B cell (primary cell): ENCODE measurements at regions of chr22 and their contacts with region 1.

Region 1: GRCh38 chr22:22666307-22667091 is 22.1 kb downstream of the GGTLC2 start:
- DNase-seq: peak; percentile 63
- ATAC-seq: peak; percentile 78
- H3K4me3 ChIP-seq: no peak overlapping the region
- H3K4me3 Mint-ChIP-seq: no peak overlapping the region
- H3K27ac ChIP-seq: no peak overlapping the region
- H3K27ac Mint-ChIP-seq: peak overlapping the region; percentile 6
- H3K4me1 ChIP-seq: peaks cover 6 to 18% of the 10 kb centered on the region in 2 donors
- H3K4me1 Mint-ChIP-seq: peaks cover 17% of the 10 kb centered on the region
- H3K27me3 ChIP-seq: peaks cover 0 to 2% (median 0%) of the 10 kb centered on the region in 4 experiments
- H3K27me3 Mint-ChIP-seq: peaks cover 3% of the 10 kb centered on the region
- CTCF ChIP-seq: peak; percentile 71

Region 2: DNA sequence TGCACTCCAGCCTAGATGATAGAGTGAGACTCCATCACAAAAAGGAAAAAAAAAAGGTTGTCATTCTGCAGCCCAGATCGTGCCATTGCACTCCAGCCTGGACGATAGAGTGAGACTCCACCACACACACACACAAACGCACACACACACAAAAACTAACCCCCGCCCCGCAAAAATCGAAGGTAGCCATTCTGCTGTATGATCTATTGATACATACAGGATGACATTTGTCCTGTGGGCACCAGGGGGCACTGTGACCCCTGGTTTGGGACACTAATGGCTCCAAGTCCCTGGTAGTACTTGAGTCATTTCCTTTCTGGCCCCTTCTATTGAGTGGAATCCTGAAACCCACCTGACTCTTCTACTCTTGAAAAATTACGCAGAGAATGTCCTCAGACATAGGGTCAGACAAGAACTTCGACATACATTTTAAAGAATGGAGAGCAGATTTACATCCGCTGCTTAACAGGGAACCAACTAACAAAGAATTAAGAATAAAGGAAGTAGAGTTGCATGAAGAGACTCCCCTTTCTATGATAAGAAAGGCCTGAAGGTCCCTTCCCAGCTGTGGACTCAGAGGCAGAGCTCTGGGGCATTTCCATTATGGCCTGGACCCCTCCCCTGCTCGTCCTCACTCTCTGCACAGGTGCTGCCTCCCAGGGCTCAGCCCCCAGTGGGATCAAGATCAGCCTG is 72.4 kb before region 1 on chr22:
- CTCF ChIA-PET with region 1: interaction called, 3 read pairs
- POLR2A ChIA-PET with region 1: interaction called, 3 read pairs
- intact Hi-C with region 1: loop called (anchors 5 kb)
- DNase-seq: peak; percentile 80
- ATAC-seq: peak; percentile 74
- H3K4me3 ChIP-seq: no peak overlapping the region
- H3K4me3 Mint-ChIP-seq: no peak overlapping the region
- H3K27ac ChIP-seq: no peak overlapping the region
- H3K27ac Mint-ChIP-seq: peak overlapping the region; percentile 82
- H3K4me1 ChIP-seq: peaks cover 10 to 11% of the 10 kb centered on the region in 2 donors
- H3K4me1 Mint-ChIP-seq: peaks cover 26% of the 10 kb centered on the region
- H3K27me3 ChIP-seq: no peaks in the 10 kb centered on the region
- H3K27me3 Mint-ChIP-seq: no peaks in the 10 kb centered on the region
- CTCF ChIP-seq: peak; percentile 81

Region 3: GRCh38 chr22:22681221-22681739 is 14.8 kb after region 1 on chr22:
- CTCF ChIA-PET with region 1: interaction called, 21 read pairs
- POLR2A ChIA-PET with region 1: no interaction called
- intact Hi-C with region 1: no loop called
- DNase-seq: no peak
- ATAC-seq: no peak
- H3K4me3 ChIP-seq: no peak overlapping the region
- H3K4me3 Mint-ChIP-seq: no peak overlapping the region
- H3K27ac ChIP-seq: no peak overlapping the region
- H3K27ac Mint-ChIP-seq: no peak overlapping the region
- H3K4me1 ChIP-seq: peaks cover 34 to 44% of the 10 kb centered on the region in 2 donors
- H3K4me1 Mint-ChIP-seq: peaks cover 48% of the 10 kb centered on the region
- H3K27me3 ChIP-seq: no peaks in the 10 kb centered on the region
- H3K27me3 Mint-ChIP-seq: no peaks in the 10 kb centered on the region
- CTCF ChIP-seq: no peak

Region 4: DNA sequence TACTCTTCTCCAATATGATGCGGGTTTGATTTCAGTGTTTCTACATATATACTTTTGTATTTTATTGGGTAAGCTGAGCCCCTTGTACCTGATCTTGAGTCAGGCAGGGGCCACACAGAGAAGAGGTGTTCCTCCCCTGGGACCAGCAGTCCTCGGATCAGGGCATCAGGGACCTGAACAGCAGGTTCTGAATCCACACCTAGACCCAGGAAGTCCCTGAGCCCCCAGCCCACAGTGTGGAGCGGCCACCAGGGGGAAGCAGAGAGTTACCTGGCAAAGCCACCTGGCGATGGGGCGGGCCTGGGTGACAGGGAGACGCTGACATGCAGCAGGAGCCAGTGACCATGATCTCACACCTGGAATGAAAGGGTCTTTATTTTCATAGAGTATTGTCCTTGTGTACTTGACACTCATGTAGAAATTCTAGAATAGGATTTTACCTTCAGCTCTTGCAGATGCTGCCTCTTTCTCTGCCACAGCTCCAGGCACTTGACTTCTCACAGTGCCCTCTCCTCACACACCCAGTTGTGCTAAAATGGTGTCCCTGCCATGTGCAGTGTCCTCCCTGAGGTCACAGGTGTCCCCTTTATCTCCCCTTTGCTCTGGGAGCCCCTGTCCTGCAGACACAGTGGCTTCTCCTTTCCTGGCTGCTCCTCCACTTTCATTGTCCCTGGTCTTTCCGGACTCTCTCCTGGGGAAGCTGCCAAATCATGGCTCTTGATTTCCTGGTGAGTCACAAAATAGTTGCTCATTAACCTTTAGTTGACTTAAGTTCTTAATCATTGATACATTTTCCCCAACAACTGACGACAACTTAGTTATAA is 26.4 kb after region 1 on chr22:
- CTCF ChIA-PET with region 1: interaction called, 31 read pairs
- POLR2A ChIA-PET with region 1: no interaction called
- intact Hi-C with region 1: no loop called
- DNase-seq: peak; percentile 83
- ATAC-seq: peak; percentile 81
- H3K4me3 ChIP-seq: no peak overlapping the region
- H3K4me3 Mint-ChIP-seq: peak overlapping the region; percentile 71
- H3K27ac ChIP-seq: peak overlapping the region in 1 of 2 donors; percentile 26
- H3K27ac Mint-ChIP-seq: peak overlapping the region; percentile 85
- H3K4me1 ChIP-seq: peaks cover 28 to 44% of the 10 kb centered on the region in 2 donors
- H3K4me1 Mint-ChIP-seq: peaks cover 34% of the 10 kb centered on the region
- H3K27me3 ChIP-seq: no peaks in the 10 kb centered on the region
- H3K27me3 Mint-ChIP-seq: no peaks in the 10 kb centered on the region
- CTCF ChIP-seq: peak; percentile 87

Region 5: DNA sequence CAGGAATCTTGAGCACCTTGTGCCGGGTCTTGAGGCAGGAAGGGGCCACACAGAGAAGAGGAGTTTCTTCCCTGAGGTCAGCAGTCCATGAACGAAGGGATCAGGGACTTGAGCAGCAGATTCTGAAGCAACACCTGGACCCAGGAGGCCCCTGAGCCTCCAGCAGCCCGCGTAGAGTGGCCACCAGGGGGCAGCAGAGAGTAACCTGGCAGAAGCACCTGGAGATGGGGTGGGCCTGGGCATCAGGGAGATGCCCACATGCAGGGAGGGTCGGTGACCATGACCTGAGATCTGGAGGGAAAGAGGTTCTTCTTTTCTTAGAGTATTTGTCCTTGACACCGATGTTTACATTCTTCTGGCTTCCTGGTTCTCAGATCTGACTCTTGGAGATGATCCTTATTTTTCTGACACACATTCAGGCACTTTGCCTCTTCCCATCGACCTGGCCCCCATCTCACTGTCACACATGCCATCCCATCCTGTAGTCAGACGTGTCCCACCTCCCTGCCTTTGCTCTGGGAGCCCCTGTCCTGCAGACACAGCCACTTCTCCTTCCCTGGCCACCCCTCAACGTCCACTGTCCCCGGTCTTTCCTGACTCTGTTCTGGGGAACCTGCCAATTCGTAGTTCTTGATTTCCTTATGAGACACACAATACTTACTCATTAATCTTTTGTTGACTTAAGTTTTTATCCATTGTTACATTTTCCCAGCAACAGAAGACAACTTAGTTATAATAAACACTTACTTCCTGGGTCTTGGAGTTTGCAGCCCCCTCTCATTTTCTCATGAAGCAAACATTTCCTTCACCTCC is 44.4 kb after region 1 on chr22:
- CTCF ChIA-PET with region 1: interaction called, 20 read pairs
- POLR2A ChIA-PET with region 1: no interaction called
- intact Hi-C with region 1: no loop called
- DNase-seq: peak; percentile 80
- ATAC-seq: peak; percentile 48
- H3K4me3 ChIP-seq: no peak overlapping the region
- H3K4me3 Mint-ChIP-seq: peak overlapping the region; percentile 23
- H3K27ac ChIP-seq: no peak overlapping the region
- H3K27ac Mint-ChIP-seq: peak overlapping the region; percentile 76
- H3K4me1 ChIP-seq: peaks cover 30 to 53% of the 10 kb centered on the region in 2 donors
- H3K4me1 Mint-ChIP-seq: peaks cover 52% of the 10 kb centered on the region
- H3K27me3 ChIP-seq: peaks cover 0 to 2% (median 0%) of the 10 kb centered on the region in 4 experiments
- H3K27me3 Mint-ChIP-seq: peaks cover 3% of the 10 kb centered on the region
- CTCF ChIP-seq: peak; percentile 89

Region 6: GRCh38 chr22:22748297-22748743 is 81.8 kb after region 1 on chr22:
- CTCF ChIA-PET with region 1: interaction called, 25 read pairs
- POLR2A ChIA-PET with region 1: no interaction called
- intact Hi-C with region 1: no loop called
- DNase-seq: peak; percentile 67
- ATAC-seq: peak; percentile 26
- H3K4me3 ChIP-seq: no peak overlapping the region
- H3K4me3 Mint-ChIP-seq: peak overlapping the region; percentile 26
- H3K27ac ChIP-seq: no peak overlapping the region
- H3K27ac Mint-ChIP-seq: peak overlapping the region; percentile 13
- H3K4me1 ChIP-seq: peaks cover 40 to 47% of the 10 kb centered on the region in 2 donors
- H3K4me1 Mint-ChIP-seq: peaks cover 51% of the 10 kb centered on the region
- H3K27me3 ChIP-seq: no peaks in the 10 kb centered on the region
- H3K27me3 Mint-ChIP-seq: no peaks in the 10 kb centered on the region
- CTCF ChIP-seq: no peak

Region 7: DNA sequence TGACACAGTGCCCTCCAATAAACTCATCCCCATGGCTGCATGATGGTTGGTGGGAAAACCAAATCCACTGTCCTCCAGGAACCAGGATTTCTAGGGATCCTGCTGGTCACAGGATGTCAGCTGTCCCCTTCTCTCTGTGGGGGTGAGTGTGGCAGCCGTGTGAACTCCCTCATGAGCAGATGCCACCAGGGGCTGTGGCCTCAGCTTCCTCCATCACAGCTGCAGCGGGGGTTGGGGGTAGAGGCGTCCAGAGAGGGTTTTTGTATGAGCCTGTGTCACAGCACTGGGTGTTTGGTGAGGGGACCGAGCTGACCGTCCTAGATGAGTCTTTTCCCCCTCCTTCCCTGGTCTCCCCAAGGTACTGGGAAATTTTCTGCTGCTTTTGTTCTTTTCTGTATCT is 247.5 kb after region 1 on chr22:
- CTCF ChIA-PET with region 1: no interaction called
- POLR2A ChIA-PET with region 1: no interaction called
- intact Hi-C with region 1: no loop called
- DNase-seq: peak; percentile 60
- ATAC-seq: peak; percentile 73
- H3K4me3 ChIP-seq: no peak overlapping the region
- H3K4me3 Mint-ChIP-seq: peak overlapping the region; percentile 55
- H3K27ac ChIP-seq: peak overlapping the region; percentile 65 to 77
- H3K27ac Mint-ChIP-seq: peak overlapping the region; percentile 76
- H3K4me1 ChIP-seq: peaks cover 57 to 83% of the 10 kb centered on the region in 2 donors
- H3K4me1 Mint-ChIP-seq: peaks cover 81% of the 10 kb centered on the region
- H3K27me3 ChIP-seq: no peaks in the 10 kb centered on the region
- H3K27me3 Mint-ChIP-seq: no peaks in the 10 kb centered on the region
- CTCF ChIP-seq: no peak